ENCODE measurements at regions of chr11 and their contacts with region 1.

Region 1: DNA sequence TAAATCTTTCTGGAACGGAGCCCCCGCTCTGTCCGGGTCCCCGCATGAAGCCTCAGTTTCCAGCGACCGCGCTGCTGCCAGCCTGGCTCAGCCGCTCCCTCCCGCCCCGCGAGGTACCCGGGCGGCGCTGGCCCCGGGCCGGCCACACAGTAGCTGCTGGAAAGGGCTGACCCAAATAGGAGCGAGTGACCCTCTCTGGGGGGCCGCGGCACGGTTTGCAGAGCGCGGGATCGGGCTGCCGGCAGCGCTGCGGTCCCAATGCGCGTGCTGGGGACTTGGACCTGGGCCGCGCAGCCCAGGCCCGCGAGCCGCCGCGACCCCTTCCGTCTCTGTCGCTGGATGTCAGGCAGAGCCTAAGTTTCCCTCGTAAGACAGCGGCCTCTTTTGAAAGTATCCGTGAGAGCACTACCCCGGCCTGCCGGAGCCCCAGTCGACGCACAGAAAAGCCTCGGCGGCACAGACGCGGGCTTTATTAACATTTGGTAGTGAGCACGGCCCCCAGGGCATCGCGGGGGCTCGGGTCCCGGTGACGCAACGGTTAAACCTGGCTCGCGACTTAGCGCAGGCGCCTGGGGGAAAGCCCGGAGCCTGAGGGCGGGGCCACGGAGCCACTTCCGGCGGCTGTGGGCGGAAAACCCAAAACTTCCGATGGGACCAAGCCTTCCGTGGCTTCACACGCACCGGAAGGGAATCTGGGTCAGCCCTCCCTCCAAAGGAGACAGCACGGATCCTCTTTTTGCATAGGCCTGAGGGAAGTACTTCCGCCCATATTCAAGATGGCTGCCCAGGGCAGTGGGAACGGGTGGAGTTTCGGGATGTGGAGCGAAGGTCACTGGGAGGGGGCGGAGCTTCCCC is 14.9 kb downstream of the BAD start:
- DNase-seq: peak; percentile 92

Region 2: DNA sequence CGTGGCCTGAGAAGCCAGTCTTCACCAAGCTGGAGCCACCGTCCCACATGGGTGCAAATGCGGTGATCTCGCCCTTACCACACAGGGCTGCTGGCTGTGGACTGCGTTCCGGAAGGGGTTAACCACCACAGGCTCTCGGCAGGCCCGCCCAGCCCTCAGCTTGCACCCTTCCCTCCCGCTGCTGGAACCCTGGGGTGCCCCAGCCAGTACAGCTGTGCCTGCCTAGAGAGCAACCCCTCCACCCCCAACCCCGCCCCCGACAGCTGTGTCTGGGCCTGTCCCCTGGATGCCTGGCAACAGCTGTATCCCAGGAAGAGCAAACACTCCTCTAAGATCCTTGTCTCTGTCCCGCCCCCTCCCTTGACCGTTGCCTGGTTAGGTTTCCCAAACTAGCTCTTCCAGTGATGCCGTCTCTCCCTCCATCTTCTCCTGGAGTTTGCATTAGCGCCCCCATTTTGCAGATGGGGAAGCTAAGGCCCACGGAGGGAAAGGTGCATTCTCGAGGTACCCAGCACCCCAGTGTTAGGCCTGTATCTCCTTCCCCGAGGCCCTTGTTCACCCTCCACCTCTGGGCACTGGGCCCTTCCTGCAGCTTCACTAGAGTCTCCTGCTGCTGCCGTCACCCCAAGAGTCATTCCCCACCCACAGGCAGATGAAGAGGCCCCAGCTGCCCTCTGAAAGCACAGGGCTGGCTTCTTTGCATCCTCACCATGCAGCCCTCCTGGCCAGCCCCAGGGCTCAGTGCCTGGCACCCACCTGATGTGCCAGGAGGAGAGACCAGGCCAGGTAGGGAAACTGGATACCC is 307.8 kb before region 1 on chr11:
- CTCF ChIA-PET with region 1: no interaction called
- POLR2A ChIA-PET with region 1: no interaction called
- DNase-seq: no peak

Region 3: DNA sequence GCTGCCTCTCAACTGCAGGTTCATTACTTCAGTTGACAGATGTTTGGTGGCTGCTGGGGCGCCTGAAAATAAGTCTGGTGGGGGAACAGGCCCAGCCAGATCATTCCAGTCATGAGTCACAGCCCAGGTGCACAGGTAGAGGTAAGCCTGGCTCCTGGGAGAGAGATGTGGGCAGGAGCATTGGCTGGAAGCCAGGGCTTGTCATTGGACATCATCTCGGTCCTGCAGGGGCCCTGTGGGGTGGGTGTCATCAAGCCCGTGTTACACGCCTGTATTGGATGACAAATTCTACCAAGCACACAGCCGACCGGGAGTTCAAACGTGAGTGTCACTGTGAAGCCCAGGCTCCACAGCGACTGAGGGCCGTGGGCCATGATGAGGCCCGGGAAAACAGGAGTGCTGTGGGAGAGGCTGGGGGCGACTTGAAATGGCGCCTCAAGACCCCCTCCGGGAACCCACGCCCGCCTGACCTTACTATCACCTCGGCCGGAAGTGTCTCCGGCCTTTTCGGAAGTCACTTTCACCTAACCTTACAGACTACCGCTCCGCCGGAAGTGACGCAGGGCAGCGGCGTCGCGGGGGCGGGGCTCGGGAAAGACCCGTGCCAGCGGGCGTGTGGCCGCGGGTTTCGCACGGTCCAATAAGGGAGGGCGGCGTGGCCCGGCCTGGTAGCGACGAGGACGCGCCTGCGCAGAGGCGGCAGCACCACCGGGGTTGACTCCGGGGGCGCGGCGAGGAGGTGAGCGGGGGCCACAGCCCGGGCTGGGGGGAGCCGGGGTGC is 29.0 kb before region 1 on chr11 and contains the start of gene FKBP2:
- CTCF ChIA-PET with region 1: interaction called, 3 read pairs
- POLR2A ChIA-PET with region 1: interaction called, 78 read pairs
- DNase-seq: peak; percentile 96

Region 4: DNA sequence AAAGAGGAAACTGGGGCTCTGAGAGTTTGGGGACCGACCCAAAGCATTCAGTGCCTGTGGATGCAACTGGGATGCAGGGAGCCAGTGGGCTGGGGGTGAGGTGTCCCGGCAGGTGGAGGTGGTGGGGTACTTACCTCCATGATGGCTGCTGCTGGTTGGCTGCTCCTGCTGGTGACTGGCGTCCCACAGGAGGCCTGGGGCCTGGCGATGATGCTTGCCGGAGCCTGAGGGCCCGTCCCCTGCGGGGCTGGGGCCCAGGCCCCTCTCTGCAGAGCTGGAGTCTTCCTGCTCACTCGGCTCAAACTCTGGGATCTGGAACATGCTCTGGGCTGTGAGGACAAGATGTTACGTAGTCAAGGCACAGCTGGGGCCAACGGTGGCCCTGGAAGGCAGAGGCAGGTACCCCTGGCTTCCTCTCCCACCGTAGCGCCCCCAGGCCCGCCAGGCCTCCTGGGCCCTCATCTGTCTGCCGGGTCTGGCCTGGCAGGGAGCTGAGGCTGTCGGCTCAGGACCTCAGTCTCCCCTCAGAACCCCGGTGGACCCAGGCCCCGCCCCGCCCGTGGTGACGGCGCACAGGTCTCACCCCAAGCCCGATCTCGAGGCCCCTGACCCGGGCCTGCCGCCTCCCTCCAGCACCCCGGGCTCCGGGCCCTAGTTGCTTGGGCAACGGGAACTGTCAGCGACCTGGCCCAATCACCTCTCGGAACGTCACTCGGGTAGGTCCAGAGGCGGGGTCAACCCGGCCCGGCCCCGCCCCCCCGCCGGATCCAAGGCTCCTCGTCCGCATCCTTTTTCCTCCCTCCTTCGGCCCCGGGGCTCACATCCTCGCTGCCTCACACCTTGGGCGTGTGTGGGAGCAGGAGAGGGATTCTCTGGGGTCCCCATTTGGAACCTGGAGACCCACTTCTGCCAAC is 14.7 kb after region 1 on chr11 and contains the start of gene BAD:
- CTCF ChIA-PET with region 1: interaction called, 8 read pairs
- POLR2A ChIA-PET with region 1: interaction called, 81 read pairs
- DNase-seq: peak; percentile 97

Region 5: GRCh38 chr11:64304316-64305072 is 34.9 kb after region 1 on chr11:
- CTCF ChIA-PET with region 1: interaction called, 66 read pairs
- POLR2A ChIA-PET with region 1: interaction called, 79 read pairs
- DNase-seq: peak; percentile 81

Region 6: DNA sequence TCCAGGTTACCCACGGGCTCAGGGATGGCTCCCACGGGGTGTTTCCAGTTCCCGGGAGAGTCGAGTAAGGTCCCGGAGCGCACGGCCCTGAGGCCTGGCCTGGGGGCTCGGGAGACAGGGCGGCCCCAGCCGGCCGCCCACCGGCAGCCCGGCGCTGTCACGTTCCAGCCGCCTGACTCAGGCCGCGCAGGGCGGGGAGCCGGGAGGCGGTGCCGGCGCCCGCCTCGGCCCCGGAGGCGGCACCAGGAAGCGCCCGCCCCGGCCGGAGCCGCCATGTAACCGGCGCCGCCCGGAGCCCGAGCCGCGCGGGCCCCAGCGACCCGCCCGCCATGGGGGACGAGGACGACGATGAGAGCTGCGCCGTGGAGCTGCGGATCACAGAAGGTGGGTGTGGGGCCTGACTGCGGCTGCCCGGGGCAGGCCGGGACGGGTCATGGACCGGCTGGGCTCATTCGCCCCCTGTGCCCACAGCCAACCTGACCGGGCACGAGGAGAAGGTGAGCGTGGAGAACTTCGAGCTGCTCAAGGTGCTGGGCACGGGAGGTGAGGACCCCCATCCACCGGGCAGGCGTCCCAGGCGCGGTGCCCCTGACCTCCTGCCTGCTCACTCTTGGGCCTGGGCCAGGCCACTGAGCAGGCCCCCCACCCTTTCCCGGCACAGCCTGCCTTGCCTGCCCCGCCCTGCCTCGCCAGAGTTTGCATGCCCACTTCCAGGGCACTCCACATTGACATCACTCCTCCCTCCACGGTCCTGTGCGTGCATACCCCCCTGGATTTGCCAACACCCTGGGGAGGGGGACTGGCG is 89.5 kb after region 1 on chr11 and contains the start of gene RPS6KA4:
- CTCF ChIA-PET with region 1: interaction called, 9 read pairs
- POLR2A ChIA-PET with region 1: interaction called, 31 read pairs
- DNase-seq: peak; percentile 76